Posterior vena cava (tissue), 2 donors: ENCODE measurements at regions of chr11 and their contacts with region 1.

Region 1: DNA sequence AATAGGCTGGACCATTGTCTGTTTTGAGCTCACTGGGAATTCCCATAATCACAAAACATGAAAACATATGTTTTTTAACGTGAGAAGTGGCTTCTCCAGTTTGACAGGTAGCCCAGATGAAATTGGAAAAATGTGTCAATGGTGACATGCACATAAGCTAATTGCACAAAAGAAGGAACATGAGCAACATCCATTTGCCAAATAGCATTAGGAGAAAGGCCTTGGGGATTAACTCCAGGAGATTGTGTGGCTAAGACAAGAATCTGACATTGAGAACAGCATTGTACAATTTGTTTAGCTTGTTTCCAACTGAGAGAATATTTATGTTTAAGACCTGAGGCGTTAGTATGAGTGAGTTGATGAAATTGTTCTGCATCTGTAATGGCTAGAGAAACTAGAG is 147.0 kb upstream of the API5 start:
- DNase-seq: no peak

Region 2: GRCh38 chr11:43177975-43178374 is 13.1 kb after region 1 on chr11:
- intact Hi-C with region 1: loop called in 1 of 2 experiments (anchors 1 kb)
- DNase-seq: no peak